ENCODE measurements at regions of chr17 and their contacts with region 1.

Region 1: DNA sequence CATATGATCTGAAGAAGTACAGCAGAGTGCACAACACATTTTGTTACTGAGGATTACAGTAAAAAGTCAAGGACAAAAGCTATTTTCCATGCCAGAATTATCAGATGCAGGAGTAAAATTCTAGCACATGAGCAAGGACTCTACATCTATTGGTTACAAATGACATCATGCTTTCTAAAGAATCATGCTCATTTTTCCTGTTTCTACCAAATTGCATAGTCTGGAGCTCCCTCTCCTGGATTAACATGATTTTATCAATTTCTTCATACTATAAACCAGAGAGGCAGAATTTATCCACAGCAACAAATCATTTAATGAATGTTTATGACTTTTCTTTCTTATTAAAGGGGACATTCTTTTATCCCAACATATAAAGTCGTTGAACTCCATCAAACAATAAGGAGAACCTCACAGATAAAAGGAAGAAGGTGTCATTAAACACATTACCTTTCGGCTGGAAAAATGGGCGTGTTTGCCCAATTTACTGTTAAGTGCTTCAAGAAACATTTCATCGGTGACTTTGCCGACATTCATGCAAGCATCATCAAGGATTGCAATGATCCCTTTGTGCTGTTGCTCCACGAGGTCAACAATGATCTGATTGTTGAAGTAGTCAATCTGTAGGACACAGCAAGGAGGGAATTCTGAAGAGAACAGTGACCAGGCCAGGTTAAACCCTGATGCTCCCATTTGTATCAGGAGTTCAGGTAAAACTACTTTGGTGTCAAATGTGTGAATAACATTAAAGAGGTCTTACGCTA is 121.7 kb downstream of the MYO1D start:
- DNase-seq: no peak

Region 2: DNA sequence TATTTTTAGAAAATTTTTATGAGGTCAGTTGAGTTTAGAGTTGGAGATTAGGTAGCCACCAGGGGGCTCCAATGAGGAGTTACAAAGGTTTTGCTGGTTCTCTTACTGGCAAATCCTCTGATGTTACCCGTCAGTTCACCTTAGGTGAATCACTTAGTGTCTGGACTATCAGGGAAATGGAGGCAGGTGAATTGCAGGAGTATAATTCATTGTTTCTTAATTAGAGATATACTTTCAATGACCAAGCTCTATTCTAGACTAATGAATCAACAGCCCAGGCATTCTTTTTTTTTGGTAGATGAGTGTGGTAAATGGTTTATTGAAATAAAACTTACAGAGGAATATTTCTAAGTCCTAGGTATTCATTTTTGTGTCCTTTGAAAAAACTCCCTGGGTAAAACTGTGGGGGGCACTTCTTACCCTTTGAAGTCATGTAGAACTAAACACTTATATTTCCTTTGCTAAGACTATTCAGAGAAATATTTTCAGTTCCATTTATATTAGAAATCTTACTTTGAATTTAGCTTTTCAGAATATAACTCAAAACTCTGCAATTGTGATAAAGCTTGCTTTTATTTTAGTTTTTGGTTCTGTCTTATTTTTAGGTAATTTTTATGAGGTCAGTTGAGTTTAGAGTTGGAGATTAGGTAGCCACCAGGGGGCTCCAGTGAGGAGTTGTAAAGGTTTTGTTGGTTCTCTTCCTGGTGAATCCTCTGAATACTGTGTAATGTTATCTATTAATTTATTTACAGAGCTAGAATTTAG is 293.2 kb before region 1 on chr17:
- intact Hi-C with region 1: loop called (anchors 5 kb)
- DNase-seq: no peak

Region 3: GRCh38 chr17:32588982-32589381 is 166.2 kb before region 1 on chr17:
- intact Hi-C with region 1: no loop called
- DNase-seq: no peak

Region 4: DNA sequence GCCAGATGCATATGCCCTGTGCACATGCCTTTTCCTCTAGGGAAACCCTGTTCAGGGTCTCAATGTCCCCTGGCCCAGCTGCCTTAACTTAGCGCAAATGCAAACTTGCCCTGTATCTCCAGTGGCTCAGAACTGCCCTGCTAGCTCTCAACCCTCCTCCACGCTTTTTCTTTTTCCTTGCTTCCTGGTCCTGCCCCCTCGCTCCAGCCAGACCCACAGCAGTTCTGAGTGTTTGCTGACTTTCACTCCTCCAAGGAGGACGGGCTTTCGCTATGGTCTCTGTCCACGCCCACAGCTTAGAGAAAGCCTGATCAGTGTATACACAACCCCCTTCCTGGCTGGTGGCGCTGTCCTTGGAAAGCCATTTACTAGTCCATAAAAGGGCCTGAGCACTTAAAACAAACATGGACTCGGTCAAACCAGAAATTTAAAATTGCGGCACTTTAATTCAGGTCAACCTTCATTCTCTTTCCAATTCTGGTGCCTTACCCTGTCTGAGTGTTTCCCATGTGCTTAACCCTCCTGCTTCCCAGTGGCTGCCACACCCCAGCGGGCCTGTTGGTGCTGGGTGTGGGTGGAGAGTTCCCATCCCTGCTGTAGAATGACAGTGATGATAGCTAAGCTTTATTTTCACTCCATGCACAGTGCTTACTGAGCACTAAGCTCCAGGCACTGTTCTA is 157.1 kb after region 1 on chr17:
- intact Hi-C with region 1: no loop called
- DNase-seq: no peak

Measured in cardiac septum (tissue), 1 donor.